Activated CD4-positive, alpha-beta memory T cell treated with anti-CD3 and anti-CD28 coated beads for 36 hours (primary cell): ENCODE measurements at regions of chr19 and their contacts with region 1.

Region 1: GRCh38 chr19:2050991-2051772 is at the start of gene MKNK2:
- DNase-seq: peak; percentile 95
- H3K4me3 Mint-ChIP-seq: peak within 1 kb of the TSS; percentile 86
- H3K27ac Mint-ChIP-seq: peak within 1 kb of the TSS; percentile 92
- H3K4me1 Mint-ChIP-seq: peaks cover 45% of the 10 kb centered on the region
- H3K27me3 Mint-ChIP-seq: no peaks in the 10 kb centered on the region
- total RNA-seq, gene MKNK2: 143 to 157 TPM

Region 2: DNA sequence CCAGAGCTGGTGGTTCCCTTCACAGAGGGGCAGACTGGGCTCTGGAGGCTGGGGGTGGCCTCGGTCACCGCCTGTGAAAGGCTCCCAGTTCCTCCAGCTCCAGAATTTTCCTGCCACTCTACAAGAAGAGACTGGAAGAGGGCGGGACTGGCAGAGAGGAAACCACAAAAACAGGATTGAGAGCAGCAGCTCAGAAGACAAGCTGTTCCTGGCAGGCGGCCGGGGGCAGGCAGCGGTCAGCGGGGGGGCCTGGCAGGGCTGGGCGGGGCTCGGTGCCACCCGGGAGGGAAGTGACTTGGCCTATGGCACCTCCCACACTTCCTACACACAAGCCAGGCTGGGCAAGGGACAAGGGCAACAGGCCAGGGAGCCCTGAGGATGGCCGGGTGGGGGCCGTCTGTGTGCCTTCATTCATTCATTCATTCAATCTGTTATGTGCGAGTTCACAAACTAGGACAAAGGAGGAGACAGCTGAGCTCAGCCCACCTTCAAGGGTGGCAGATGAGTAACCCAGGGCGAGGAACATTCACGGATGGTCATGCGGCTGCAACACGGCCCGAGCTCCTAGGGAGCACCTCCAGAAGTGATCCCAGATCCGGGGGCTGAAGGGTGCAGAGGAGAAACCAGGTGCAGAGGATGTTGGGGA is 18.8 kb before region 1 on chr19:
- CTCF ChIA-PET with region 1: interaction called, 3 read pairs
- POLR2A ChIA-PET with region 1: interaction called, 10 read pairs
- intact Hi-C with region 1: no loop called
- DNase-seq: peak; percentile 78
- H3K4me3 Mint-ChIP-seq: peak overlapping the region; percentile 67
- H3K27ac Mint-ChIP-seq: peak overlapping the region; percentile 61
- H3K4me1 Mint-ChIP-seq: peaks cover 24% of the 10 kb centered on the region
- H3K27me3 Mint-ChIP-seq: no peaks in the 10 kb centered on the region

Region 3: GRCh38 chr19:2061495-2062381 is 10.6 kb after region 1 on chr19:
- CTCF ChIA-PET with region 1: no interaction called
- POLR2A ChIA-PET with region 1: interaction called, 20 read pairs
- intact Hi-C with region 1: loop called (anchors 1 kb)
- DNase-seq: peak; percentile 99
- H3K4me3 Mint-ChIP-seq: peak overlapping the region; percentile 86
- H3K27ac Mint-ChIP-seq: peak overlapping the region; percentile 91
- H3K4me1 Mint-ChIP-seq: peaks cover 27% of the 10 kb centered on the region
- H3K27me3 Mint-ChIP-seq: no peaks in the 10 kb centered on the region

Region 4: GRCh38 chr19:2076526-2076981 is 25.4 kb after region 1 on chr19:
- CTCF ChIA-PET with region 1: no interaction called
- POLR2A ChIA-PET with region 1: no interaction called
- intact Hi-C with region 1: no loop called
- DNase-seq: no peak
- H3K4me3 Mint-ChIP-seq: no peak overlapping the region
- H3K27ac Mint-ChIP-seq: peak overlapping the region; percentile 23
- H3K4me1 Mint-ChIP-seq: peaks cover 25% of the 10 kb centered on the region
- H3K27me3 Mint-ChIP-seq: no peaks in the 10 kb centered on the region